ENCODE measurements at regions of chr12 and their contacts with region 1.

Region 1: GRCh38 chr12:90978117-90978770 is 23.3 kb upstream of the CCER1 start:
- DNase-seq: peak in 1 of 5 donors; percentile 23
- H3K4me3 ChIP-seq: no peak overlapping the region
- H3K27ac ChIP-seq: peak overlapping the region in 1 of 2 donors; percentile 76
- H3K4me1 ChIP-seq: peaks cover 2% of the 10 kb centered on the region
- H3K27me3 ChIP-seq: no peaks in the 10 kb centered on the region
- CTCF ChIP-seq: peak; percentile 52 to 92 (median 85)
- EP300 ChIP-seq: no peak
- POLR2A ChIP-seq: no peak

Region 2: DNA sequence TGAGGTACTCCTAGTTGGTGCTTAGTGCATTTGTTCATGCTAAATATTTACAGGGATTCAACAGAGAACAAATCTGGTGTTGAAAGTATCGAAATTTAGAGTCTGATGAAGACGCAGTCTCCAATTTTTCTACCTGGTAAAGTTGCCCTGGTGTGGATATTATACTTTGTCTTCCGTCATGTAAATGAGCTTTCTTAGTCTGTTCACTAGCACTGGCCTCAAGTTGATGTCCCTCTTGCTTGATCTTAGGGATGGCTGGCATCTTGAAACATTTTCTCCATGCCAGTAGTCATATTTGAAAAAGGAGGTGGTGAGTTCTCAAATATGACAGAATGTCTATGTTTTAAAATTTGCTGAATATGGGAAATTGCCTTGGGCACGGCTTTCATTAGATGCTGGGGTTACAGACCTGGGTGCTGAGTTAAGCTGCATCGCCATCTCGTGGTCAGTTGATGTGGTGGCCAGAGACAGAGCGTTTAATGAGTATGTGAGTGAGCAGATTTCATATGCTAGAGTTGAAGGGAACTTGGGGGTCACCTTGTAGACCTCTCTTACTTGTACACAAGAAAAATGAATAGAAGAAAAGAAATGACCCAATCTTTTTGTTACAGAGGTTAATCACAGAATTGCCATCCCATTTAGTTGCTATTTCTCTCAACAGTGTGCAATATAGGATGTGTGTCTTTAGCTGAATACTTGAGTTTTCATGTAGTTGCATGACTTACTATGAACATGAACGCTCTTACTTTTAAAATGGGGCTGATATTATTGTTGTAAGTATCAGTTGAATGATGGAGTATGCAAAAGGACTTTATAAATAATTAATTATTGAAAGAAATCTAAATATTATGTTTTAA is 377.1 kb after region 1 on chr12:
- intact Hi-C with region 1: loop called in 3 of 4 experiments (anchors 5 to 10 kb)
- DNase-seq: peak; percentile 70 to 85 (median 81)
- H3K4me3 ChIP-seq: no peak overlapping the region
- H3K27ac ChIP-seq: no peak overlapping the region
- H3K4me1 ChIP-seq: peaks cover 2% of the 10 kb centered on the region
- H3K27me3 ChIP-seq: no peaks in the 10 kb centered on the region
- CTCF ChIP-seq: peak; percentile 82 to 86 (median 83)
- EP300 ChIP-seq: no peak
- POLR2A ChIP-seq: no peak